WTC11 (cell line): ENCODE measurements at regions of chr13 and their contacts with region 1.

Region 1: GRCh38 chr13:80342471-80343380 is 1.8 kb upstream of the SPRY2 start:
- DNase-seq: peak; percentile 87
- ATAC-seq: peak; percentile 23
- H3K4me3 Mint-ChIP-seq: peak overlapping the region; percentile 75
- H3K27ac Mint-ChIP-seq: peak overlapping the region; percentile 88
- H3K4me1 Mint-ChIP-seq: peaks cover 41% of the 10 kb centered on the region
- H3K27me3 Mint-ChIP-seq: peaks cover 7% of the 10 kb centered on the region
- CTCF ChIP-seq: peak; percentile 97

Region 2: GRCh38 chr13:80297094-80297493 is 45.6 kb before region 1 on chr13:
- CTCF ChIA-PET with region 1: interaction called, 9 read pairs
- POLR2A ChIA-PET with region 1: interaction called, 30 read pairs
- DNase-seq: peak; percentile 21
- ATAC-seq: peak; percentile 96
- H3K4me3 Mint-ChIP-seq: peak overlapping the region; percentile 37
- H3K27ac Mint-ChIP-seq: peak overlapping the region; percentile 96
- H3K4me1 Mint-ChIP-seq: peaks cover 46% of the 10 kb centered on the region
- H3K27me3 Mint-ChIP-seq: no peaks in the 10 kb centered on the region
- CTCF ChIP-seq: no peak

Region 3: GRCh38 chr13:80359778-80360465 is 17.2 kb after region 1 on chr13:
- CTCF ChIA-PET with region 1: interaction called, 24 read pairs
- POLR2A ChIA-PET with region 1: interaction called, 30 read pairs
- DNase-seq: peak; percentile 80
- ATAC-seq: peak; percentile 57
- H3K4me3 Mint-ChIP-seq: peak overlapping the region; percentile 59
- H3K27ac Mint-ChIP-seq: peak overlapping the region; percentile 97
- H3K4me1 Mint-ChIP-seq: peaks cover 43% of the 10 kb centered on the region
- H3K27me3 Mint-ChIP-seq: no peaks in the 10 kb centered on the region
- CTCF ChIP-seq: no peak

Region 4: DNA sequence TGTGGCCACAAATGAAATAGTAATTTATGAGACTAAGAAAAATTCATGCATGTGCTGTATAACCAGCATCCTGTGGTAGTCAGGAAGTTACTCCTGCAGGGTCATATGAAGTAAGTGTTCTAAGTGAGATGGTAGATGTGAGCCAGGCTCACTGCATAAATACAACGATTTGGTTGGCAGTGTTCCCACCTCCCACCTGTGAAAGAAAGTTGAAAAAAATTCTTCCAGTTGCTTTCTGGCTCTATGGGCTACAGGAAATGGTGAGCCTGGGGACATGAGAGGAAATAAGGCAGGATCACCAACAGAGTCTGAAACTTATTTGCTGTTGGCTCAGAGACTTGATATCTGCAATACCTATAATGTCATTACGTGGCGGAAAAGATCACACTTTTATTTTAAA is 299.9 kb after region 1 on chr13:
- CTCF ChIA-PET with region 1: no interaction called
- POLR2A ChIA-PET with region 1: no interaction called
- DNase-seq: no peak
- ATAC-seq: no peak
- H3K4me3 Mint-ChIP-seq: no peak overlapping the region
- H3K27ac Mint-ChIP-seq: peak overlapping the region; percentile 34; the same call in 1 of the 2 replicates
- H3K4me1 Mint-ChIP-seq: no peaks in the 10 kb centered on the region
- H3K27me3 Mint-ChIP-seq: no peaks in the 10 kb centered on the region
- CTCF ChIP-seq: no peak